ENCODE measurements at regions of chr6 and their contacts with region 1.

Region 1: DNA sequence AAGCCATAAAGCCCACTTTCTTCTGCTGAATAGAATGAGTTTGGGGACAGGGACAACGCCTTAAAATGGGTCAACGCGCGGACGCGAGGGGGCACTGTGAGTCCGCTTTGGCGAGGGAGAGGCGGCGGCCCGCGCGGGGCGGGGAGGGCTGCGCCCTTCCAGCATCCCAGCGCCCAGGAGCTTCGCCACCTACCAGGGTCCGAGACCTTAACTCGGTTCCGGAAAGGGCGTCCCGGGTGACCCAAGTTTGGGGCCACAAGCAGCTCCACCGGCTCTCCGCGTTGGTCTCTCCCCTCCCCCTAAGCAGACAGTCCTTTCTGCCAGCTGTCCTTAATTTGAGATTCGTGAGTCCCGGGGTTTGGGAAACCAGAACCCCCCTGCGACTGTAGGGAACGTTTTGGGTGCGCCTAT is 1.8 kb upstream of the SAMD5 start:
- DNase-seq: no peak
- H3K4me3 ChIP-seq: peak overlapping the region; percentile 67
- CTCF ChIP-seq: peak; percentile 87

Region 2: DNA sequence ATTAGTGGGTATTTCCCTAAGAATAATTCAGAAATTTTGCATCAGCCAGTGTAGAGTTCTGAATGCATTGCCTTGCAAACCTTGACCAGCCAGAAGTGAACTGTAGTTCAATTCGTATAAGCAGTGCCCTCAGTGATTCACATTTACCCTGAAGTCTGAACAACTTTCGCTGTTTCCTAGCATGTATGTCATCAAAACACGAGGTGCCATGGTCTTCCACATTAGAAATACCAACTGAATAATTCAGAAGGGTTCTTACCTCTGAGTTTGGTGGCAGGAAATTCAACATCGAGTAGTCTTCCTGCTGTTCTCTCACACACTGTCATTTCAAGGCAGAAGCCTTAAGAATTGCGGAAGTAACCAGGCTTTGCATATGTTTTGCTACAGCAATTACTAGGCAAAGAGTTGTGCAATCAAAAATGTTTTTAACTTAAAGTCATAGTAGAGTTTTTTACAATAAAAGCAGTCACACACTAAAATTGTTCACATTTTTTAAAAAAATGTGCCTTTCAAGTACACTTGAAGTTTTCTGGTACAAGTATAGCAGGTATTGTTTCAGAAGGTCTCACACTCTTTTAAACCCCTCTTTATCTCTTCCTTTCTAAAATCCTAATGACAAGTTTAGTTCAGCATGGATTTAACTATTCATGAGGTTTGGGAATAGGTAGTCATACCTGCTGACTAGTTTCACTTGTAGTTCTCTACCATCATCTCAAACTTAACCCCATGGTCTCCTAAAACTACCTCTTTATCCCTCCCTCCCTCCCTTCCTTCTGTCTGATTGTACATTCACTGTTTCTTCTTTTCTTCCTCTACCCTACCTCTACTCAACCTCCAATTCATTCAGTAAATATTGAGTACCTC is 184.2 kb before region 1 on chr6:
- in situ Hi-C with region 1: no loop called
- DNase-seq: no peak
- H3K4me3 ChIP-seq: no peak overlapping the region
- CTCF ChIP-seq: no peak

Region 3: DNA sequence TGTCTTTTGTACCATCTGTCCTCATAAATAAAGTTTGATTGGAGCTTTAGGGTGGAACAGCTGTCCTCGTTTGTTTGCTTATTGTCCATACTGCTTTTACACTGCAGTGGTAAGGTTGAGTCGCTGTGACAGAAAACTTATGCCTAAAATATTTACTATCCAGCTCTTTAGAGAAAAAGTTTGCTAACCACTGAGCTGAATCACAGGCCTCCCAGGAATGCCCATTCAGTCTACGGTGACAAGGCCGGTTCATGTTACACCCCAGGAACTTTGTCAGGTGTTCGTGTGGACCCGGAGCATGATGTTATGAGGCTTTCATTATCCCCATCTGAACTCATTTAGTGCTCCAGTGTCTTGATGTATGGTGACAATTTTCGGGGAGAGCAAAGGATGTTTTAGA is 402.9 kb after region 1 on chr6:
- in situ Hi-C with region 1: no loop called
- DNase-seq: peak; percentile 6
- H3K4me3 ChIP-seq: no peak overlapping the region
- CTCF ChIP-seq: no peak

Region 4: DNA sequence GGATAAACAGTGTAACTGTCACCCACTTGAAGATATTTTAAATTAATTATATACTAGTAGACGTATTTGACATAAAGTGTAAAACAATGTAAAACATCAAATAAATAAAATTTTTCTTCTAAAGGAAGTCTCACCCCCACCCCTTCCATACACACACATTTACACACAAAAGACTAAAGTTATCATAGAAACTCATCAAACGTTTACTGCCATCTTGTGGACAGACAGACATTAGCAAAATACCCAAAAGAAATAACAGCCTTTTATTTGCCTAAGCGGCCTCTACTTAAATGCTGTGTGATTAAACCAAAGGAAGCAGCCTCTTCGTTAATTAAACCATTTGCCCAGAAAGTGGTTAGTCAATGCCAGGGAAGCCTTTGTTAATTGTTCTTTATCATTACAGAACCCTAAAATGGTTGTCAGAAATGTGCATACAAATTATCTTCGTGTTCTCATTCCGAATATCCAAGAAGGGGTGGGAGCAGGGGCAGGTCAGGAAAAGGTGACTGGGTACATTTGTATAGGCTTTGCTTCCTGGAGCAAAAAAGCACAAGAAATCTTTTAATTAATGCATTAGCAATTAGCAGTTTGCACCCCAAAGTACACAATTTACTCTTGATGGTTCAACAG is 659.7 kb after region 1 on chr6:
- in situ Hi-C with region 1: loop called (anchors 25 kb)
- DNase-seq: peak; percentile 60
- H3K4me3 ChIP-seq: no peak overlapping the region
- CTCF ChIP-seq: peak; percentile 47

Measured in astrocyte of the cerebellum (primary cell).